ENCODE measurements at regions of chr1 and their contacts with region 1.

Region 1: DNA sequence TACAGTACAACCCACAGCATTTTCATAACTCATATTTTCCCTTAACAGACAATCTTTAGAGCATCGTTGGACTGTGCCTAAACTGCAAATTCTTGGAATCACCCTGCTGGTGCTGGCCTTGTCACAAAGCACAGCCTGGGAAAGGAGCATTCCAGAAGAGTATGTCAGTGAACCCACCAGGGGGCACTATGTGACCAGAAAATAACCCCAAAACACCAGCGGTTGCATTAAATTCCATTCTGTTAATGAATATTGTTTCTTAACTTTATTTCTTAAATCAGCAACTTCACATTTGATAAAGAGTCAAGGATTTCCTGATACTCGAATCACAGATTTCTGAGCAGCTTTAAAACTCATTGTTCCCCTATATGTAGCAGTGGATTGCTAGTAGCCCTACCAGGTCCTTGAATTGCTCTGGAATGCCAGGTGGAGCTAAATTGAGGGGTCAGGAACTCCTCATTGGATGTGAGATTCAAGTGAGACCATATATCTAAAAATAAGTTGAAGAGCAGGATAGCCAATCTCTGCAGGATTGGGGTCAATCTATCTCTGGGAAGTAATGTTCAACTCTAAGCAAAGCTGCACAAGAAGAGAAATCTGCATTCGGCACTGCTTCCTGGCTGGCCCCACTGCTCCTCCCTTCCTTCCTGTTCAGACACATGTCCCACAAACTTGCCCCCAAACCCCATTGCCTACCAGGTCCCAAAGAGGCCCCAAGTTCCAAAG is 12.7 kb upstream of the RAB4A start:
- DNase-seq: peak; percentile 71 to 88
- H3K4me3 ChIP-seq: no peak overlapping the region
- H3K27ac ChIP-seq: no peak overlapping the region
- H3K4me1 ChIP-seq: peaks cover 0 to 20% (median 9%) of the 10 kb centered on the region in 4 donors
- H3K27me3 ChIP-seq: no peaks in the 10 kb centered on the region
- CTCF ChIP-seq: peak in 5 of 7 experiments; percentile 63 to 85 (median 69)
- EP300 ChIP-seq: no peak
- POLR2A ChIP-seq: no peak

Region 2: GRCh38 chr1:229117664-229118300 is 140.4 kb before region 1 on chr1:
- intact Hi-C with region 1: no loop called
- DNase-seq: peak; percentile 91 to 93
- H3K4me3 ChIP-seq: no peak overlapping the region
- H3K27ac ChIP-seq: peak overlapping the region; percentile 58 to 85 (median 81)
- H3K4me1 ChIP-seq: peaks cover 17 to 69% (median 46%) of the 10 kb centered on the region in 4 donors
- H3K27me3 ChIP-seq: no peaks in the 10 kb centered on the region
- CTCF ChIP-seq: no peak
- EP300 ChIP-seq: peak; percentile 7
- POLR2A ChIP-seq: no peak

Region 3: GRCh38 chr1:229203030-229203751 is 55.0 kb before region 1 on chr1:
- intact Hi-C with region 1: no loop called
- DNase-seq: peak in 1 of 2 donors; percentile 91
- H3K4me3 ChIP-seq: no peak overlapping the region
- H3K27ac ChIP-seq: peak overlapping the region in 1 of 5 donors; percentile 84
- H3K4me1 ChIP-seq: peaks cover 13 to 67% (median 29%) of the 10 kb centered on the region in 4 donors
- H3K27me3 ChIP-seq: no peaks in the 10 kb centered on the region
- CTCF ChIP-seq: no peak
- EP300 ChIP-seq: no peak
- POLR2A ChIP-seq: no peak

Region 4: GRCh38 chr1:229479660-229480399 is 221.6 kb after region 1 on chr1:
- intact Hi-C with region 1: loop called (anchors 10 kb)
- DNase-seq: peak in 1 of 2 donors; percentile 7
- H3K4me3 ChIP-seq: no peak overlapping the region
- H3K27ac ChIP-seq: no peak overlapping the region
- H3K4me1 ChIP-seq: peaks cover 0 to 6% (median 2%) of the 10 kb centered on the region in 4 donors
- H3K27me3 ChIP-seq: no peaks in the 10 kb centered on the region
- CTCF ChIP-seq: no peak
- EP300 ChIP-seq: no peak
- POLR2A ChIP-seq: no peak

Measured in stomach (tissue), 19 donors.